SK-N-SH (cell line): ENCODE measurements at regions of chr14 and their contacts with region 1.

Region 1: GRCh38 chr14:45253068-45253753 is at the start of gene MIS18BP1:
- DNase-seq: peak; percentile 84
- H3K4me3 ChIP-seq: peak within 1 kb of the TSS; percentile 64 to 68
- H3K27ac ChIP-seq: peak within 1 kb of the TSS; percentile 62 to 67
- H3K4me1 ChIP-seq: no peaks in the 10 kb centered on the region; a peak in 2 of 4 replicates
- H3K27me3 ChIP-seq: no peaks in the 10 kb centered on the region
- CTCF ChIP-seq: peak; percentile 60
- EP300 ChIP-seq: no peak
- RAD21 ChIP-seq: no peak
- polyA plus RNA-seq, gene MIS18BP1: 2.6 and 3.0 TPM in 2 replicates

Region 2: GRCh38 chr14:45242706-45243105 is 10.5 kb before region 1 on chr14:
- CTCF ChIA-PET with region 1: interaction called, 12 read pairs
- POLR2A ChIA-PET with region 1: no interaction called
- DNase-seq: no peak
- H3K4me3 ChIP-seq: no peak overlapping the region
- H3K27ac ChIP-seq: no peak overlapping the region
- H3K4me1 ChIP-seq: no peaks in the 10 kb centered on the region; a peak in 1 of 4 replicates
- H3K27me3 ChIP-seq: no peaks in the 10 kb centered on the region
- CTCF ChIP-seq: no peak
- EP300 ChIP-seq: no peak
- RAD21 ChIP-seq: no peak

Region 3: DNA sequence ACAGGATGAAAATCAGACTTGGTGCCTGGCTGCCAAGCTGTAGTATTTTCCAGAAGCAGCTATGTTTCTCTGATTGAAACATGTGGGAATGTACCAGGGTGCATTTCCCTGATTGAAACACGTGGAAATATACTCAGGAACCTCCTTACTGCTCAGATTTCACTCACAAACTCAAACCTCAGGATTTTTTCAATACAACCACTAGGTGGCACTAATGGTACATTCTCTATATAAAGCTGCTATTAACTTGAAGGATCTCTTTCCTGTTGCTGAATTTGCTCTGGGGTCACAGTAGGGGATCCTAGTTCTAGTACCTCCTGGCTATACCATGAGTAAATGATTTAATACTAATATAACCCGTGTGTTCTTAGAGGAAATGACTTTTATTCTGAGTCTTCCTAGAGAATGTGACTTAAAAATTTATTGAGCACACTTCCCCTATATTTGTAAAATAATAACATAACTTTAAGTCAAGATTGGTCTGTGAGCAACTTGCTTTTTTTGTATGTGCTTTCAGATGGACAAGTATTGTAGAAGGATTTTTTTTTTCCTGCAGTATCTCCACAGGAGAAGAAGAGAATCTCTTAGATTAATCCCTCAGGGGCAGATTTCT is 173.6 kb after region 1 on chr14:
- CTCF ChIA-PET with region 1: no interaction called
- POLR2A ChIA-PET with region 1: no interaction called
- DNase-seq: peak; percentile 10
- H3K4me3 ChIP-seq: no peak overlapping the region; a peak in 1 of 4 replicates
- H3K27ac ChIP-seq: no peak overlapping the region
- H3K4me1 ChIP-seq: no peaks in the 10 kb centered on the region
- H3K27me3 ChIP-seq: no peaks in the 10 kb centered on the region
- CTCF ChIP-seq: peak; percentile 58
- EP300 ChIP-seq: no peak
- RAD21 ChIP-seq: peak; percentile 52